AG04450 (cell line): ENCODE measurements at regions of chr5 and their contacts with region 1.

Region 1: DNA sequence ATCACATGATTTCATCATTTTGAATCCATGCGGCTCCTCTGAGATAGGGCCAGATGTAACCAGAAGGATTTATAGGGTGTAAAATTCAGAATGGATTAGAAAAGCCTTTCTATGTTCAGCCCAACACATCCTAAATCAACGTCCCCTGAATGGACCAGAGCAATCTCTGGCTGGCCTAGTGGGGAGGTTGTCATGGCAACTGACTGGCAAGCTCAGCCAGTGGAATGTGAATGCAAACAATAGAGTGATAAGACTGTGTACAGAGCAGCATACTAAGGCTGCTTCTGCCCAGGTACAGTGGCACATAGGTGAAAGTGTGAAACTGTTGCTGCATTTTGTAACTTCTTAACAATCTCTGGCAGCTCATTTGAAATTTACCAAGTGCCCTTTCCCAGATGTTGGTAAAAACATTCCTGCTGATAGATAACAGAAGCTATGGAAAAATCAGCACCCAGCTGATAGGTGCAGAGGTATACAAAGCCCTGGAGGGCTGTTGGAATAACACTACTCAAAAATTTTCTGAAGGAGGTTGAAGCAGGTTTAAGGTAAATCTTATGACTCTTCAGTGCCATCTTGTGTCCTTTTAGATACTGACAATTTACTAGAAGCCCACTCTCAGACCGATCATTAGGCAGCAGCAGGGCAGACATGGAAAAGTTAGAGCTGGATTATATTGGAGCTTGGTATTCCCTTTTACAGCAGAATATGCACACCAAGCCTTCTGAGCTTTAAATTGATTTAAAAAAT is 267.2 kb downstream of the RAB3C start:
- DNase-seq: no peak
- H3K4me3 ChIP-seq: no peak overlapping the region
- H3K27ac ChIP-seq: no peak overlapping the region
- H3K27me3 ChIP-seq: peaks cover 4% of the 10 kb centered on the region
- CTCF ChIP-seq: peak; percentile 53

Region 2: GRCh38 chr5:58477760-58478376 is 372.2 kb before region 1 on chr5:
- CTCF ChIA-PET with region 1: interaction called, 45 read pairs
- POLR2A ChIA-PET with region 1: no interaction called
- DNase-seq: no peak
- H3K4me3 ChIP-seq: no peak overlapping the region
- H3K27ac ChIP-seq: no peak overlapping the region
- H3K27me3 ChIP-seq: no peaks in the 10 kb centered on the region
- CTCF ChIP-seq: peak; percentile 23; the same call in 1 of the 2 replicates

Region 3: DNA sequence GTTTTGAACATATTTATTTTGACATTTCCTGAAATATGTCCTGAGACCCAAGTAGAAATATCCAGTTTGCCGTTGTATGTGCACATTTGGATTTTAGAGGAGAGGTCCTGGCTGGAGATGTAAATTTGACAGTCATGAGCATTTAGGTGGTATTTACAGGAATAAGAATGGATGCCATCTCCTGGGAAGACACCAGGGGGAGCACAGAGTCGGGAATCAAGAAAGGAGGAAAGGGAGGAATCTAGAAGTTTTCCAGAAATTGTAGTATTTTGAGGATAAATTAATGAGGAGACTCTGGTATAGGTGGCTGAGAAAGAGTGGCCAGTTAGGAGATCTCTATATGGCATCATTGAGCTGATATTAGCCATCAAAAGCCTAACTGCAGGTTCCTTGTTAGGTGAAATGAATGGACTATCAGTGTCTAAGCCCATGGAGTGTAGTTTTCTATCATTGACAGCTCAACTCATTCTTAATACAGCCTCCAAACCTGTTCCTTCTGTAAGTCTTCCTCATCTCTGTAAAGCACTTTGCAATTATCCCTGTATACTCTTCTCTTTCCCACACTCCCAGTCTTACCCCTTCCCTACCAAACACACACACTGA is 351.7 kb before region 1 on chr5:
- CTCF ChIA-PET with region 1: interaction called, 176 read pairs
- POLR2A ChIA-PET with region 1: no interaction called
- DNase-seq: peak; percentile 6
- H3K4me3 ChIP-seq: no peak overlapping the region
- H3K27ac ChIP-seq: no peak overlapping the region
- H3K27me3 ChIP-seq: no peaks in the 10 kb centered on the region
- CTCF ChIP-seq: peak; percentile 87

Region 4: DNA sequence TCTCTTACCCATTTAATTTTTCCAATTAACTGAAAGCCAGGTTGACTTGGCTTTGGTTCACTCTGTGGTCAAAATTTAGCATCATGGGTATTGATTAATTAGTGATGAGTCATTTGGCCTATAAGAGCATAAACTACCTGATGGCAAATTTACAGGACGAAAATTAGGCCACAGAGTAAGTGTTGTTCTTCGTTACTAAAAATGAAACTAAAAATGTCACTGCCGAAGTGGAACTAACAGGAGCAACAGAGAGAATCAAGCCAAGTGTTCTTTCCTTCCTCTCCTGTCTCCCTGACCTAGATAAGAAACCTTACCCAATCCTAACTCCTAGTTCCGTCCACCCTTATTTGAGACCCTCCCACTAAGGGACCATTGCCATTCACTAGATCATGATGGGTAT is 90.3 kb before region 1 on chr5:
- CTCF ChIA-PET with region 1: no interaction called
- POLR2A ChIA-PET with region 1: no interaction called
- DNase-seq: no peak
- H3K4me3 ChIP-seq: no peak overlapping the region; the same call in 1 of the 2 replicates
- H3K27ac ChIP-seq: no peak overlapping the region
- H3K27me3 ChIP-seq: no peaks in the 10 kb centered on the region
- CTCF ChIP-seq: no peak

Region 5: GRCh38 chr5:58871648-58872242 is 21.7 kb after region 1 on chr5:
- CTCF ChIA-PET with region 1: interaction called, 10 read pairs
- POLR2A ChIA-PET with region 1: no interaction called
- DNase-seq: no peak
- H3K4me3 ChIP-seq: no peak overlapping the region
- H3K27ac ChIP-seq: no peak overlapping the region
- H3K27me3 ChIP-seq: peaks cover 6% of the 10 kb centered on the region
- CTCF ChIP-seq: peak; percentile 72

Region 6: GRCh38 chr5:58893551-58893950 is 43.5 kb after region 1 on chr5:
- CTCF ChIA-PET with region 1: no interaction called
- POLR2A ChIA-PET with region 1: no interaction called
- DNase-seq: no peak
- H3K4me3 ChIP-seq: no peak overlapping the region
- H3K27ac ChIP-seq: no peak overlapping the region
- H3K27me3 ChIP-seq: no peaks in the 10 kb centered on the region
- CTCF ChIP-seq: no peak